Psoas muscle (tissue), 8 donors: ENCODE measurements at regions of chr10 and their contacts with region 1.

Region 1: GRCh38 chr10:102151774-102152544 is at the start of gene NOLC1:
- DNase-seq: peak; percentile 98 to 99
- ATAC-seq: peak; percentile 96 to 98 (median 96)
- H3K4me3 ChIP-seq: peak within 1 kb of the TSS; percentile 82
- H3K27ac ChIP-seq: peak within 1 kb of the TSS; percentile 95
- H3K4me1 ChIP-seq: peaks cover 15% of the 10 kb centered on the region
- H3K27me3 ChIP-seq: no peaks in the 10 kb centered on the region
- CTCF ChIP-seq: no peak
- total RNA-seq, gene NOLC1: 38.7 to 86.1 (median 64.4) TPM

Region 2: GRCh38 chr10:101818119-101818871 is 333.7 kb before region 1 on chr10 and contains the start of gene OGA:
- intact Hi-C with region 1: loop called in 1 of 2 experiments (anchors 5 kb)
- DNase-seq: peak; percentile 98 to 99
- ATAC-seq: peak; percentile 90 to 97 (median 94)
- H3K4me3 ChIP-seq: peak within 1 kb of the TSS; percentile 93
- H3K27ac ChIP-seq: peak within 1 kb of the TSS; percentile 93
- H3K4me1 ChIP-seq: peaks cover 32% of the 10 kb centered on the region
- H3K27me3 ChIP-seq: no peaks in the 10 kb centered on the region
- CTCF ChIP-seq: no peak
- total RNA-seq, gene OGA: 52.6 to 59.8 (median 57.3) TPM

Region 3: DNA sequence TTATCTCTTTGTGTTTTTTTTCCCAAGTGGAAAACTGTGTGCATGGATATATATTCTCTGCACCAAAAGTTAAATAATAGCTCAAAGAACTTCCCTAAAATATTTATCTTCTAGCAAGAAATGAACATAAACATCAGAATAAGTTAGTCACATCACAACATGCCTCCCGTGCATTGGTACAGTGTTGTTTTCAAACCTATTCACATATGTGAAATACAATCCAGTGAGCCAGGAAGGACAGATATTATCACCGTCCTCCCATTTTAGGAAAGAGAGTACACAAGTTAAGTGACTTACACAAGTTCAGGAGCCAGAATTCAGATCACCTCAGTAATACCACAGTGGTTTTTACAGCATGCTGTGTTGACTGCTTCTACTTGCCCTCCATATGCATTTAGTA is 118.2 kb before region 1 on chr10:
- intact Hi-C with region 1: no loop called
- DNase-seq: no peak
- ATAC-seq: no peak
- H3K4me3 ChIP-seq: no peak overlapping the region
- H3K27ac ChIP-seq: no peak overlapping the region
- H3K4me1 ChIP-seq: peaks cover 17% of the 10 kb centered on the region
- H3K27me3 ChIP-seq: no peaks in the 10 kb centered on the region
- CTCF ChIP-seq: no peak

Region 4: GRCh38 chr10:102133373-102134195 is 18.4 kb before region 1 on chr10:
- intact Hi-C with region 1: loop called (anchors 2 kb)
- DNase-seq: peak; percentile 86 to 91
- ATAC-seq: peak; percentile 65 to 78 (median 72)
- H3K4me3 ChIP-seq: peak overlapping the region; percentile 100
- H3K27ac ChIP-seq: peak overlapping the region; percentile 99
- H3K4me1 ChIP-seq: peaks cover 27% of the 10 kb centered on the region
- H3K27me3 ChIP-seq: no peaks in the 10 kb centered on the region
- CTCF ChIP-seq: no peak

Region 5: GRCh38 chr10:102503281-102504220 is 351.6 kb after region 1 on chr10 and contains the start of gene SUFU:
- intact Hi-C with region 1: loop called in 1 of 2 experiments (anchors 5 kb)
- DNase-seq: peak; percentile 97 to 98
- ATAC-seq: peak; percentile 75 to 82 (median 81)
- H3K4me3 ChIP-seq: peak within 1 kb of the TSS; percentile 94
- H3K27ac ChIP-seq: peak within 1 kb of the TSS; percentile 75
- H3K4me1 ChIP-seq: peaks cover 50% of the 10 kb centered on the region
- H3K27me3 ChIP-seq: no peaks in the 10 kb centered on the region
- CTCF ChIP-seq: peak; percentile 93
- total RNA-seq, gene SUFU: 4.8 to 6.8 (median 5.5) TPM